ENCODE measurements at regions of chr1 and their contacts with region 1.

Region 1: GRCh38 chr1:37741130-37741529 is 23.8 kb downstream of the EPHA10 start:
- DNase-seq: peak; percentile 32
- H3K4me3 ChIP-seq: no peak overlapping the region
- H3K27ac ChIP-seq: no peak overlapping the region
- H3K4me1 ChIP-seq: no peaks in the 10 kb centered on the region
- H3K27me3 ChIP-seq: peaks cover 49% of the 10 kb centered on the region
- CTCF ChIP-seq: no peak

Region 2: GRCh38 chr1:37793773-37794371 is 52.7 kb after region 1 on chr1 and contains the start of gene MANEAL:
- CTCF ChIA-PET with region 1: no interaction called
- POLR2A ChIA-PET with region 1: no interaction called
- intact Hi-C with region 1: loop called (anchors 10 kb)
- DNase-seq: peak; percentile 73
- H3K4me3 ChIP-seq: peak within 1 kb of the TSS; percentile 51
- H3K27ac ChIP-seq: no peak within 1 kb of the TSS
- H3K4me1 ChIP-seq: no peaks in the 10 kb centered on the region
- H3K27me3 ChIP-seq: peaks cover 20% of the 10 kb centered on the region
- CTCF ChIP-seq: no peak
- total RNA-seq, gene MANEAL: 5.9 and 7.3 TPM in 2 replicates